ENCODE measurements at regions of chr1 and their contacts with region 1.

Region 1: GRCh38 chr1:7795406-7795805 is 11.3 kb downstream of the PER3 start:
- DNase-seq: no peak
- ATAC-seq: no peak
- H3K4me3 ChIP-seq: no peak overlapping the region
- H3K4me3 Mint-ChIP-seq: no peak overlapping the region
- H3K27ac ChIP-seq: no peak overlapping the region
- H3K27ac Mint-ChIP-seq: no peak overlapping the region
- H3K4me1 ChIP-seq: no peaks in the 10 kb centered on the region
- H3K4me1 Mint-ChIP-seq: no peaks in the 10 kb centered on the region
- H3K27me3 ChIP-seq: no peaks in the 10 kb centered on the region
- H3K27me3 Mint-ChIP-seq: no peaks in the 10 kb centered on the region
- CTCF ChIP-seq: no peak

Region 2: GRCh38 chr1:8712413-8713231 is 917.2 kb after region 1 on chr1:
- CTCF ChIA-PET with region 1: no interaction called
- POLR2A ChIA-PET with region 1: interaction called, 10 read pairs
- intact Hi-C with region 1: no loop called
- DNase-seq: peak; percentile 70
- ATAC-seq: peak; percentile 85
- H3K4me3 ChIP-seq: peak overlapping the region; percentile 5 to 54 (median 31)
- H3K4me3 Mint-ChIP-seq: peak overlapping the region; percentile 75
- H3K27ac ChIP-seq: peak overlapping the region; percentile 73 to 83
- H3K27ac Mint-ChIP-seq: peak overlapping the region; percentile 85
- H3K4me1 ChIP-seq: peaks cover 32 to 41% of the 10 kb centered on the region in 2 donors
- H3K4me1 Mint-ChIP-seq: peaks cover 38% of the 10 kb centered on the region
- H3K27me3 ChIP-seq: no peaks in the 10 kb centered on the region
- H3K27me3 Mint-ChIP-seq: no peaks in the 10 kb centered on the region
- CTCF ChIP-seq: no peak

Measured in B cell (primary cell).